ENCODE measurements at regions of chr2 and their contacts with region 1.

Region 1: GRCh38 chr2:162113776-162114168 is 38.3 kb downstream of the GCG start:
- DNase-seq: peak in 1 of 2 donors; percentile 37
- ATAC-seq: peak; percentile 73 to 97 (median 90)
- H3K4me3 ChIP-seq: no peak overlapping the region
- H3K27ac ChIP-seq: peak overlapping the region in 3 of 10 donors; percentile 31 to 51 (median 39)
- H3K4me1 ChIP-seq: peaks cover 3 to 45% (median 17%) of the 10 kb centered on the region in 9 donors
- H3K27me3 ChIP-seq: no peaks in the 10 kb centered on the region
- CTCF ChIP-seq: no peak

Region 2: DNA sequence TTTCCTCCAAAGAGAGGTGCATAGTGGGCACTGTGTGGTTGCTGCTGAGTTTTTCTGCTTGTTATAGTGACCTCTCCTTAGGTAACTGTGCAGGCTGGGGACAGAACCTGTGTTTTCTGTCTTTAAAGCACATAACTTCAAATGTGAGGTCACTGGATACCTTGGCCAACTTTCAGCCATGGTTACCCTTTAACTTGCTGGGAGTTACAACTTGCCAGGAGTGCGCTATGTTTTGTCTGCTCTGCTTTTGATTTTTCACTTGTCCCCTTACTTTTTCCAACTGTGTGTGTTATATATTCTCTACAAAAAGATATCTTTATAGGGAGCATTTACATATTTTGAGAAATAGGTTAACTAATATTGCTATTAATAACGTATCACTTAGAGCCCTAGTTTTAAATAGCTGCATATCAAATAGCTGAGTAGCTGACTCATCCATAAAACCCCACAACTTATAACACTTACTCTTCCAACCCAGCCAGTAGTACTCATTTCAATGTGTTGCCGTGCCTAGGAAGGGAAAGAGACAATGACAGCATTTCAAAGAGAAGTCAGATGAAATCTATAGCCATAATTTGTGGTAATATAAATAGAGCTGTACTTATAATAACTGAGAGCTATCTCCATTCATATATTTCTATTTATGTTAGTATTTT is 91.4 kb before region 1 on chr2:
- intact Hi-C with region 1: loop called in 1 of 10 experiments (anchors 5 kb)
- DNase-seq: no peak
- ATAC-seq: peak in 5 of 8 donors; percentile 28 to 93 (median 78)
- H3K4me3 ChIP-seq: no peak overlapping the region
- H3K27ac ChIP-seq: peak overlapping the region in 5 of 10 donors; percentile 36 to 71 (median 52)
- H3K4me1 ChIP-seq: peaks cover 0 to 17% (median 0%) of the 10 kb centered on the region in 9 donors
- H3K27me3 ChIP-seq: no peaks in the 10 kb centered on the region
- CTCF ChIP-seq: no peak

Region 3: DNA sequence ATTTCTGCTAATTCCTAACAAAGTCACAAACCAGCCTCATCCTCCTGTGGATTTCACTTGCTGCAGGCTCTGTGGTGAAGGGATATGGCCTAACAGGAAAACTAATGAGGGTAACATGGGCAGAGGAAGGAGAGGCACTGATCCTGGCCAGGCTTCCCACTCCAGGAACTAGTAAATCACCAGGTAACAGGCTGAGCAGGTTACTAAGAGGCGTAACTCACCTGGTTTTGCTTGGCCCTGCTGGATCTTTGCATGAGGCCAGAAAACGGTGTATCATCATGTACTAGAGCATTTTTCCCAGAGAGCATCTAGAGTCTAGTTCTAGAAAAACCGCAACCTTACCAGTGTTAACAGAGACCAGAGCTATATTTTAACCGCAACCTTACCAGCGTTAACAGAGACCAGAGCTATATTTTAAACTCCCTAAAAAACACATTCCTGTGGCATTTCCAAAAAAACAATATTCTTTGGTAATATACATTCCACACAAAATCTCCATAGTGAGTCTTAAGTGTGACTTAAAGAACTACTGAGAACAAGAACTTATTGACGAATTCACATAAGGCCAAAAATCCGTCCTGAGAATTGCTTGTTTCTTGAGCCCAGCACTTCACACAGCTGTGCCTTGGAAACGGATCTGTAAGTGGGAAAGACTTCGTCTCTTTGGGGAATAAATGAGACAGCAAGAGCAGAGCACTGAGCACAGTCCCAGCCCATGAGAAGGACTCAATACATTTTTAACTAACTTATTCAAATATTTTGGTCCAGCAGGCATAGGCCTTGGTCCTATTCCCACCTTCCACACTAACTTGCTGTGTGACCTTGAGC is 83.2 kb before region 1 on chr2:
- intact Hi-C with region 1: loop called in 1 of 10 experiments (anchors 5 kb)
- DNase-seq: no peak
- ATAC-seq: peak in 1 of 8 donors; percentile 28
- H3K4me3 ChIP-seq: no peak overlapping the region
- H3K27ac ChIP-seq: no peak overlapping the region
- H3K4me1 ChIP-seq: peaks cover 0 to 25% (median 5%) of the 10 kb centered on the region in 9 donors
- H3K27me3 ChIP-seq: no peaks in the 10 kb centered on the region
- CTCF ChIP-seq: no peak

Region 4: DNA sequence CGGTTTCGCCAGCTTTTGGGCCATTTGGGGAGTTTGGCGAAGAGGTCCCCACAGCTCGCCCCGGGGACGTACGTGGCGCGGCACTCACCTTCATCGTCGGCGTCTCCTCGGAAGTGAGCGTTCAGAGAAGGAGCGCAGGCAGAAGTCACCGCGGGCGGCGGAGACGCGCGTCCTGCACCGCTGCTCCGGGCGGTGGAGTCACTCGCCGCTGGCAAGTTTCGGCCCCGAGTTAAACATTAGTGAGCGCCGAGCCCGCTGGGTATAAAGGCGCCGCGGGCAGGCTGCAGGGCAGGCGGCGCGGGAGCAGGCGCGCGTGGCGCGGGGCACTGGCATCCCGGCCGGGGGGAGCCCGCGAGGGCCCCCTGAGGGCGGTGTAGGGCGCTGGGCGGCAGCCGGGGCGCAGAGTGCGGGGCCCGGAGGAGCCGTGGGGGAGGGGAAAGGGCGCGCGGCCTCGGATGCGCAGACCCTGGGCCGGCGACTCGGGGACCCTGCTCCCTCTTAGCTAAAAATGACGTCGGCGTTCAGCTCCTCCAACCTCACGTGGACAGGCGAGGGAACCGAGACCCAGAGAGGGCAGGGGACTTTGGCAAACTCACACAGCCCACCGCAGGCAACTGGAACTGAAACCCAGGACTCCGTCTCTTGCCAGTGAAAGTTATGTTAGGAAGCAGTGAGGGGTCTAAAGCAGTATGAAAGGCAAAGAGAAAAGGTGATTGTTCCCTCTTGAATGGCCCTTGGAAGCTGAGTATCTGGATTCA is 39.7 kb before region 1 on chr2 and contains the start of gene DPP4:
- intact Hi-C with region 1: loop called in 2 of 10 experiments (anchors 5 kb)
- DNase-seq: peak; percentile 14 to 38
- ATAC-seq: peak; percentile 33 to 82 (median 64)
- H3K4me3 ChIP-seq: peak within 1 kb of the TSS; percentile 52 to 84 (median 63)
- H3K27ac ChIP-seq: peak within 1 kb of the TSS in 9 of 10 donors; percentile 10 to 79 (median 65)
- H3K4me1 ChIP-seq: peaks cover 3 to 62% (median 27%) of the 10 kb centered on the region in 9 donors
- H3K27me3 ChIP-seq: peaks cover 0 to 18% (median 0%) of the 10 kb centered on the region in 7 donors
- CTCF ChIP-seq: peak in 1 of 9 donors; percentile 18
- total RNA-seq, gene DPP4: 1.7 to 8.3 (median 4.1) TPM

Region 5: GRCh38 chr2:162092658-162093556 is 20.9 kb before region 1 on chr2:
- intact Hi-C with region 1: no loop called
- DNase-seq: peak; percentile 22 to 38
- ATAC-seq: peak in 7 of 8 donors; percentile 74 to 90 (median 84)
- H3K4me3 ChIP-seq: no peak overlapping the region
- H3K27ac ChIP-seq: peak overlapping the region in 8 of 10 donors; percentile 23 to 67 (median 36)
- H3K4me1 ChIP-seq: peaks cover 0 to 43% (median 20%) of the 10 kb centered on the region in 9 donors
- H3K27me3 ChIP-seq: no peaks in the 10 kb centered on the region
- CTCF ChIP-seq: no peak

Region 6: GRCh38 chr2:162103446-162104009 is 10.2 kb before region 1 on chr2:
- intact Hi-C with region 1: no loop called
- DNase-seq: no peak
- ATAC-seq: peak in 1 of 8 donors; percentile 13
- H3K4me3 ChIP-seq: no peak overlapping the region
- H3K27ac ChIP-seq: no peak overlapping the region
- H3K4me1 ChIP-seq: peaks cover 0 to 13% (median 5%) of the 10 kb centered on the region in 9 donors
- H3K27me3 ChIP-seq: no peaks in the 10 kb centered on the region
- CTCF ChIP-seq: no peak

Region 7: DNA sequence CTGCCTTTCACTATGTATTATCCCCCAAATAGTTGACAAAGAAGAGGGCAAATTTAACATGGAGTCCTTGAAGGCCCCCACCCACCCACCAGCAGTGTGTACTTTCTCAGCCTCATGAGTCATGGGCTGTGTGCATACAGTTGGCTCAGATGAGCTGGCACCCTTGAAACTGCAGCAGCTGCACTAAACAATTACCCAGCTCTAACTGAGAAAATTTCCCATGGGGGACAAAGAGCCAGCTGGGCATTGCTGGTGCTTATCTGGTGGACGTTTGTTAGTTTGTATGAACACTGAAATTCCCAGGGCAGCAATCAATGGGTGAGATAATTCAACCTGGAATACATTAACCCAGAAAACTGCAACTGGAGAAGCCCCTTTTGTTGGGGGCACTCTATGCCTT is 361.9 kb after region 1 on chr2:
- intact Hi-C with region 1: no loop called
- DNase-seq: no peak
- ATAC-seq: no peak
- H3K4me3 ChIP-seq: no peak overlapping the region
- H3K27ac ChIP-seq: no peak overlapping the region
- H3K4me1 ChIP-seq: no peaks in the 10 kb centered on the region
- H3K27me3 ChIP-seq: no peaks in the 10 kb centered on the region
- CTCF ChIP-seq: no peak

Region 8: GRCh38 chr2:162581959-162582798 is 468.4 kb after region 1 on chr2:
- intact Hi-C with region 1: no loop called
- DNase-seq: no peak
- ATAC-seq: no peak
- H3K4me3 ChIP-seq: no peak overlapping the region
- H3K27ac ChIP-seq: no peak overlapping the region
- H3K4me1 ChIP-seq: no peaks in the 10 kb centered on the region
- H3K27me3 ChIP-seq: no peaks in the 10 kb centered on the region
- CTCF ChIP-seq: no peak

Measured in heart right ventricle (tissue), 16 donors.